ENCODE measurements at regions of chr3 and their contacts with region 1.

Region 1: DNA sequence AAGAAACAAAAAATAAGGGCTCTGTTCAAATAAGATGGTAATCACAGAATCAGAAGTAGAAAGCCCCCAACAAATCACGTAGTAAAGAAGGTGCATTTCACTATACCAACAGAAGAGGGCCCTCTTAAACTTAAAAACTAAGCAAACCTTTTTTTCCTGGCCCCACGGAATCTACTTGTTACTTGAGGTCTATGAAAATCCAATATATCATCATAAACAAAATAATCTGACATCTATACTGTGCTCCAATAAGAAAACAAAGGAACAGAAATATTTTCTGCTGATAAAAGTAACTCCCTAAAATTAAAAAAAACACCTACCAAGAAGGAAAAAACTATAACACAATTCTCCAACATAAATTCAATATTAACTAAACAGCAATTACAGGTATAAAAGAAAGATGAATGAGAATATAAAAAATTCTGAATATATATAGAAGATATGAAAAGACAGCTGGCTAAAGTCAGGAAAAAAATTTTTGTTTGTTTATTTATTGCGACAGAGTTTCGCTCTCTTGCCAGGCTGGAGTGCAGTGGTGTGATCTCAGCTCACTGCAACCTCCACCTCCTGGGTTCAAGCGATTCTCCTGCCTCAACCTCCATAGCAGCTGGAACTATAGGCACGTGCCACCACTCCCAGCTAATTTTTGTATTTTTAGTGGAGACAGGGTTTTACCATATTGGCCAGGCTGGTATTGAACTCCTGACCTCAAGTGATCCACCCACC is 81.8 kb downstream of the CLASP2 start:
- DNase-seq: peak in 2 of 7 donors; percentile 37 to 41
- H3K4me3 ChIP-seq: no peak overlapping the region
- H3K27ac ChIP-seq: no peak overlapping the region
- H3K4me1 ChIP-seq: peaks cover 0 to 5% of the 10 kb centered on the region in 2 donors
- H3K27me3 ChIP-seq: no peaks in the 10 kb centered on the region
- CTCF ChIP-seq: peak; percentile 51 to 82 (median 67)
- POLR2A ChIP-seq: no peak

Region 2: GRCh38 chr3:33717866-33718594 is 81.7 kb after region 1 on chr3 and contains the start of gene CLASP2:
- intact Hi-C with region 1: loop called (anchors 5 kb)
- DNase-seq: peak; percentile 87 to 92 (median 89)
- H3K4me3 ChIP-seq: peak within 1 kb of the TSS; percentile 37 to 96 (median 83)
- H3K27ac ChIP-seq: peak within 1 kb of the TSS; percentile 83 to 100 (median 99)
- H3K4me1 ChIP-seq: peaks cover 22 to 26% of the 10 kb centered on the region in 2 donors
- H3K27me3 ChIP-seq: no peaks in the 10 kb centered on the region
- CTCF ChIP-seq: peak in 3 of 6 experiments; percentile 5 to 21 (median 21)
- POLR2A ChIP-seq: peak; percentile 35 to 83
- total RNA-seq, gene CLASP2: 47.2 to 85.4 (median 71.0) TPM